Natural killer cell (primary cell): ENCODE measurements at regions of chr15 and their contacts with region 1.

Region 1: DNA sequence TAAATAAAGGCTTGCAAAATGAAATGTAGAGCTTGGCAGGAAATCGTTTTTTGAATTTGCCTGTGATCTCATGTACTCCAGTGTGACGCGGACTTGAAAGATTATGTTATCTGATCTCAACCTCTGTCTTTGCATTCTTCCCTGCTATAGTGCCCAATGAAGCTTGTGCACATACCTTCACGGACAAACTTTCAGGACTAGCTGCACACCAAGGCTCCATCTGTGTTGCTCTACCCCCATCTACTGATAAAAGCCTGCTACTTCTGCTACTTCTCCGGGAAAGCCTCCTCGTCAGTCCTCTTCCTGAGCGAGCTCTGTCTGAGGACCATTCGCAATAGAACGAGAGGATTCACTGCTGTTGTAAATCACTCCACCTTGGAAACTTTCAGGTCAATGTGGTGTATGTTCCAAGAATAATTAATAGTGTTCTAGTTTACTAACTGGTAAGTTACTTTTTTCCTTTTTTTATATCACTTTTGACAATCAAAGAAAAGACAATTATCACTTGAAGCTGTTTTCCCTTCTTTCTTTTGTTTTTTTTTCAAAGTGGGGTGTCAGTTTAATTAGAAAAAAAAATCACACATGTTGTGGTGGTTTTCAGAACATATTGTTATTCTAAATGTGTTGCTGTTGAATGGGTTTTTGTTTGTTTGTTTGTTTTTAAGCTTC is 217.6 kb downstream of the ARRDC4 start:
- DNase-seq: peak; percentile 22 to 61
- ATAC-seq: peak; percentile 75 to 99 (median 97)
- H3K4me3 ChIP-seq: no peak overlapping the region
- H3K4me3 Mint-ChIP-seq: no peak overlapping the region
- H3K27ac ChIP-seq: no peak overlapping the region
- H3K27ac Mint-ChIP-seq: no peak overlapping the region
- H3K4me1 ChIP-seq: no peaks in the 10 kb centered on the region
- H3K4me1 Mint-ChIP-seq: peaks cover 7 to 11% of the 10 kb centered on the region in 2 donors
- H3K27me3 ChIP-seq: peaks cover 5% of the 10 kb centered on the region
- H3K27me3 Mint-ChIP-seq: peaks cover 52 to 75% of the 10 kb centered on the region in 2 donors
- CTCF ChIP-seq: peak; percentile 93

Region 2: DNA sequence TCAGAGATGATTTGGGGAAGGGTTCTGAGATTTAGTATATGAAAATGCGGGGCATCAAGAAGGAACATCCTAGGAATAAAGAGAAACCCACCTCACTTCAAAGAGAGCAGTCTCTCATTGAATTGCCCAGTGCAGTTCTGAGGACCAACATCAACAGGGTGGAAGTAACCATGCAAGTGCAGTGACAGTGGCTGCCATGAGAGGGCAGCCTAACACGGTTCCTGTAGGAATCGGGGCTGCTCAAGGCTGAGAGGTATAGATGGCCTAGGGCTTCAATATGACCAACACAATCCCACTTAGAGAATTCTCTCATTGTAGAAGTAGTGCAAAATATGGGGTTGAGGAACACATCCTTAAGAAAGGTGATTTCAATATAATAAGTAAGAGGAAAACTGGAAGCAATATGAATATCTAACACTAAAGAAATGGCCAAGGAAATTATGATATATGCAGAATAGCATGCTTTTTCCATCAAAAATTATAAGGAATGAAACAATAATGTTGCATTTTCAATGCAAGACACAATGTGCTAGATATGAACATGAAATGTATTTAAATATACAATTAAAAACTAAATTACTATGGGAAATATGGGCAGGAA is 268.7 kb before region 1 on chr15:
- intact Hi-C with region 1: loop called (anchors 1 kb)
- DNase-seq: peak; percentile 61 to 70
- ATAC-seq: peak; percentile 80 to 97 (median 97)
- H3K4me3 ChIP-seq: no peak overlapping the region
- H3K4me3 Mint-ChIP-seq: no peak overlapping the region
- H3K27ac ChIP-seq: no peak overlapping the region
- H3K27ac Mint-ChIP-seq: no peak overlapping the region
- H3K4me1 ChIP-seq: no peaks in the 10 kb centered on the region
- H3K4me1 Mint-ChIP-seq: no peaks in the 10 kb centered on the region
- H3K27me3 ChIP-seq: no peaks in the 10 kb centered on the region
- H3K27me3 Mint-ChIP-seq: peaks cover 39 to 69% of the 10 kb centered on the region in 2 donors
- CTCF ChIP-seq: peak; percentile 96

Region 3: DNA sequence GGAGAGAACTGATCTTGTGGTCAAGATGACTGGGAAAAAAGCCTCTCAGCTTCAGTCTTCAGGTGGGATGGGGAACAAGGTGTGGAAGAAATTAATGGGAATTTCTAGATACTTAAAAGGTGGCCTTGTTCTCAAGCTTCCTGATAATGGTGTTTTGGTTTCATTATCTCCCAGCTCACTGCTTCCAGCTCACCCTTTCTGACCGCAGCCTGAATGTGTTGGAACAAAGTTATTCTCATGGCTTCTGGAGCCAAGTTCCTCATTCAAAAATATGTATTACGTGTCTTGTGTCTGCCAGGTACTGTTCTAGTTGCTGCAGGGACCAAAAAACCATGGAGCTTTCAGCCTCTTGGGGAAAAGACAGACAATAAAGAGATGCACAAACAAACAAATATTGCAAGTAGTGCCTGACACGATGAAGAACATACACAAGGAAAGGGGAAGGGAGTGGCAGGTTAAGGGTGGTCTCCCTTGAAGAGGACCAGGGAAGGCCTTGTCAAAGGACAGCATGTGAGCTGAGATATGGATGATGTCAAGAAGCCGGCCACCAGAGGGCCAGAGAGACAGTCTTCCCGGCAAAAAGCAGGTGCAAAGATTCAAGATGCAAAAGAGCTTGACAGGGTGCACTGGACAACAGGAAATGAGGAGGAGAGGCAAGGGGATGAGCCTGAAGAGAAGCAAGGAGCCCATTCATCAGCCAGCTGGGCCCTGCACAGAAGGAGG is 182.0 kb before region 1 on chr15:
- intact Hi-C with region 1: loop called (anchors 10 kb)
- DNase-seq: peak in 1 of 2 donors; percentile 13
- ATAC-seq: no peak
- H3K4me3 ChIP-seq: no peak overlapping the region
- H3K4me3 Mint-ChIP-seq: no peak overlapping the region
- H3K27ac ChIP-seq: no peak overlapping the region
- H3K27ac Mint-ChIP-seq: no peak overlapping the region
- H3K4me1 ChIP-seq: no peaks in the 10 kb centered on the region
- H3K4me1 Mint-ChIP-seq: peaks cover 9 to 12% of the 10 kb centered on the region in 2 donors
- H3K27me3 ChIP-seq: no peaks in the 10 kb centered on the region
- H3K27me3 Mint-ChIP-seq: peaks cover 0 to 3% of the 10 kb centered on the region in 2 donors
- CTCF ChIP-seq: no peak

Region 4: DNA sequence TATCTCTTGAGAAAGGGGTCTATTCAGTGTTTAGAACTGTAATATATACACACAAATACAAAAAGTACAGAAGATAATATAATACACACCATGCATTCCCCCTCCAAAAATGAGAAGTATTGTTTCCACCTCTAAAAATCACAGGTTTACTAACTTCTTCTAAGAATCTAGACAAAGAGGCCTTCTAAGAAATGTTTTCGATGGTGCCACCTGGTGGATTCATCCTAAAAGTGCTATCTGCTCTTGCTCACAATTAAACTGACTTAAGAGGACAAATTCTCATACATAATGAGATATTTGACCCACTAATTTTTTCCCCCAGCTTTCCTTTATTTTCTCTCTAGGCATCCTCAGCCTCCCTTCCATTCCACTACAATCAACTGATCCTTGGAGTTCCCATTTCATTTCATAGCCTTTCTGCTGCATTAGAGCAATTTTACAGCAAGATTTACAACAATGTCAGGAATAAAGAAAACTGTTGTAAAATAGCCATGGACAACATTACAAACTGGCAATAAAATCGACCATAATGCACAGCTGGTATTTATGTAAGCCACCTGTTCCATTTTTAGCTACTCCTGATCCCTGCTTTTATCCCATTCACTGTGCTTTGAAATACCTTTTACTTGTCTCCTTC is 92.9 kb before region 1 on chr15:
- intact Hi-C with region 1: loop called (anchors 1 kb)
- DNase-seq: peak in 1 of 2 donors; percentile 64
- ATAC-seq: peak in 1 of 3 donors; percentile 66
- H3K4me3 ChIP-seq: no peak overlapping the region
- H3K4me3 Mint-ChIP-seq: no peak overlapping the region
- H3K27ac ChIP-seq: no peak overlapping the region
- H3K27ac Mint-ChIP-seq: no peak overlapping the region
- H3K4me1 ChIP-seq: no peaks in the 10 kb centered on the region
- H3K4me1 Mint-ChIP-seq: peaks cover 0 to 7% of the 10 kb centered on the region in 2 donors
- H3K27me3 ChIP-seq: no peaks in the 10 kb centered on the region
- H3K27me3 Mint-ChIP-seq: no peaks in the 10 kb centered on the region
- CTCF ChIP-seq: peak; percentile 73